H1 (cell line): ENCODE measurements at regions of chr13 and their contacts with region 1.

Region 1: GRCh38 chr13:78121459-78122348 is 203.1 kb upstream of the EDNRB start:
- DNase-seq: peak in 1 of 2 experiments; percentile 50
- H3K4me3 ChIP-seq: no peak overlapping the region
- H3K27ac ChIP-seq: no peak overlapping the region
- H3K4me1 ChIP-seq: peaks cover 0 to 5% (median 2%) of the 10 kb centered on the region in 4 experiments; a peak in 4 of 7 replicates
- H3K27me3 ChIP-seq: no peaks in the 10 kb centered on the region
- CTCF ChIP-seq: peak in 2 of 3 experiments; percentile 66 to 74; a peak in 3 of 4 replicates
- EP300 ChIP-seq: no peak
- POLR2A ChIP-seq: no peak
- RAD21 ChIP-seq: peak; percentile 88 to 90

Region 2: DNA sequence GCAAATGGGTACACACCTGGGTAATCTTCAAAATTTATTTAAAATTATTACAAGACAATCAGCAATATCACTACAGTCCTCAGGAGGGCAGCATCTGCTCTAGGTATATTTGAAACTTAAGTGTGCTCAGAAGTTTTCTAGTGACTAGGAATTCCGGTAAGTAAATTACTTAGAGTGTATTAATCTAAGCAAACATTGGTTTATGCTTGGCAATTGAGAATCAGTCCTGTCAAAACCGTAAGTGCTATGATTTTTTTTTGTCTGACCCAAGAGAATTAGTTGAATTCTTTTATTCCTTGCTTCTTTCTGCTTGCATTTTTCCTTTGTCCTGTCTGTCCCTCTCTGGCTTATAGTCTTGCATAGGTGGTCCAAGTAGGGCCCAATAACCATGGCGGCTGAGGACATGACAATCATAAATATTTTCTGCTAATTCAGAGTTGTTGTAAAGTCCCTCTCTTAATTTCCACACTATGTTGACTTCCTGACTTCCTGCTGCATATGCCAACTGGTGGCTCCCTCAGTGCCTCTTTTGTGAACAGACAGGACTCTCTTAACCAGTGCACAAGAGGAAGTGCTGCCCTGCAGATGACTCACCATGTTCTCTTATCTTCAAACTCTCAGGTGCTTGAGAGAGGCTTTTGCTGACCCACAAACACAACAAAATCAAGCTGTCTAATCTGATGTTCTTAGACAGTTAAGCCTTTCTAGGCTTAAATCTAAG is 342.0 kb before region 1 on chr13:
- CTCF ChIA-PET with region 1: interaction called, 78 read pairs
- POLR2A ChIA-PET with region 1: no interaction called
- DNase-seq: no peak
- H3K4me3 ChIP-seq: no peak overlapping the region
- H3K27ac ChIP-seq: no peak overlapping the region
- H3K4me1 ChIP-seq: peaks cover 0 to 4% (median 1%) of the 10 kb centered on the region in 4 experiments; a peak in 3 of 7 replicates
- H3K27me3 ChIP-seq: no peaks in the 10 kb centered on the region
- CTCF ChIP-seq: peak in 2 of 3 experiments; percentile 42 to 45; a peak in 2 of 4 replicates
- EP300 ChIP-seq: no peak
- POLR2A ChIP-seq: no peak
- RAD21 ChIP-seq: peak; percentile 80 to 83

Region 3: DNA sequence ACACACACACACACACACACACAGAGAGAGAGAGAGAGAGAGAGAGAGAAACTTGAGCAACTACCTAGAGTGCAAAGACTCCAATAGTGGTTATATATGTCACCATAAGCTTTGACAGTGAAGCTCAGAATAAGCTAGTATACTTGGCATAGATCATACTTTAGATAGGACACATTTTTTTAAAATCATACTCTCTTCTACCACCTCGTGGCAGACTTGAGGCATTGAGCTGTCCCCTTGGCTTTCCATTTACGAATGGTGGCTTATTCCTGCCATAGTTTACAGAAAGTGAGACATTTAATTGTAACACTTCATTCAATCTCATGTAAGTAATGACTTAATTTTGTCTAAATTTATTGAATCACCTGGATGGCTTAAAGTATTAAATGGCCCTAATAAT is 311.3 kb before region 1 on chr13:
- CTCF ChIA-PET with region 1: interaction called, 51 read pairs
- POLR2A ChIA-PET with region 1: no interaction called
- DNase-seq: no peak
- H3K4me3 ChIP-seq: no peak overlapping the region
- H3K27ac ChIP-seq: no peak overlapping the region
- H3K4me1 ChIP-seq: no peaks in the 10 kb centered on the region
- H3K27me3 ChIP-seq: no peaks in the 10 kb centered on the region
- CTCF ChIP-seq: peak in 1 of 3 experiments; percentile 52; a peak in 1 of 4 replicates
- EP300 ChIP-seq: no peak
- POLR2A ChIP-seq: no peak
- RAD21 ChIP-seq: peak; percentile 57 to 62

Region 4: GRCh38 chr13:78012040-78012439 is 109.7 kb before region 1 on chr13:
- CTCF ChIA-PET with region 1: interaction called, 15 read pairs
- POLR2A ChIA-PET with region 1: no interaction called
- DNase-seq: no peak
- H3K4me3 ChIP-seq: no peak overlapping the region
- H3K27ac ChIP-seq: no peak overlapping the region
- H3K4me1 ChIP-seq: peaks cover 0 to 2% (median 0%) of the 10 kb centered on the region in 4 experiments; a peak in 1 of 7 replicates
- H3K27me3 ChIP-seq: no peaks in the 10 kb centered on the region
- CTCF ChIP-seq: peak in 1 of 3 experiments; percentile 9; a peak in 2 of 4 replicates
- EP300 ChIP-seq: no peak
- POLR2A ChIP-seq: no peak
- RAD21 ChIP-seq: peak; percentile 13 to 33; a peak in 1 of 4 replicates

Region 5: GRCh38 chr13:78131811-78132210 is 10.1 kb after region 1 on chr13:
- CTCF ChIA-PET with region 1: interaction called, 19 read pairs
- POLR2A ChIA-PET with region 1: no interaction called
- DNase-seq: no peak
- H3K4me3 ChIP-seq: no peak overlapping the region
- H3K27ac ChIP-seq: no peak overlapping the region
- H3K4me1 ChIP-seq: no peaks in the 10 kb centered on the region
- H3K27me3 ChIP-seq: no peaks in the 10 kb centered on the region
- CTCF ChIP-seq: peak in 1 of 3 experiments; percentile 21; a peak in 1 of 4 replicates
- EP300 ChIP-seq: no peak
- POLR2A ChIP-seq: no peak
- RAD21 ChIP-seq: peak; percentile 20 to 40

Region 6: DNA sequence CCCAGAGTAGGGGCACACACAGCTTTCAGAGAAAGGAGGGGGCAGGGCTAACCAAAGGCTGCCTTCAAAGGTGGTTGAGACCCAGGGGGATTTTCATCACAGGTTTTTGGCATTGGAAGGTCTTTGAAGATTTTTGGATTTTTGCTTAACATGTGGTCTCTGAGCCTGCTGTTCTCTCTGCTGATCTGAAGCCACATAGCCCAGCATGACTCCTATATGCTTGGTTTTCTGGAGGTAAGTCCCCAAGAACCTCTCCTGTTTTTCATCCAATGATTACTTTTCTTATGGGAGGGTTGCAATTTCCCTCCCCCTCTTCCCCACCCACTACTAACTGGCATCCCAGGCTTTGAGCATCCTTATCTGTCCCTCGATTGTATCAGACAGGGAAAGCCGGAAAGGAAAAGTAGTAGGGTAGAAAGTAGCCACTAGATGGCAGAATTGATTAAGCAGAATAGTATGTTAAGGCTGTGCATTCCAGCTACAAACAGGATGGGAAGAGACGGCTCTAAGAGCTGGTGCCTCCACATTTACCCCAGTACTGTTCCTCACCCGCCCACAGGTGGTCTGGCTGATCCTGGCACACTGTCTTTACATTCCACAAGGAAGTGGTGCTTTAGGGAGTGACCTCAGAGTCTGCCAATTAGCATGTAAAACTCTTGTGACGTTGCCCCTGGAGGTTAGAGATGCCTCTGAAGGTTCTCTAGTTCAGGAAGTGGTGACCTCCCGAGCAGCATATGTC is 15.9 kb after region 1 on chr13:
- CTCF ChIA-PET with region 1: interaction called, 10 read pairs
- POLR2A ChIA-PET with region 1: no interaction called
- DNase-seq: peak; percentile 33 to 57
- H3K4me3 ChIP-seq: no peak overlapping the region
- H3K27ac ChIP-seq: no peak overlapping the region
- H3K4me1 ChIP-seq: peaks cover 0 to 5% (median under 1%) of the 10 kb centered on the region in 4 experiments; a peak in 1 of 7 replicates
- H3K27me3 ChIP-seq: no peaks in the 10 kb centered on the region
- CTCF ChIP-seq: peak in 2 of 3 experiments; percentile 58 to 74; a peak in 2 of 4 replicates
- EP300 ChIP-seq: no peak
- POLR2A ChIP-seq: no peak
- RAD21 ChIP-seq: peak; percentile 89 to 91

Region 7: DNA sequence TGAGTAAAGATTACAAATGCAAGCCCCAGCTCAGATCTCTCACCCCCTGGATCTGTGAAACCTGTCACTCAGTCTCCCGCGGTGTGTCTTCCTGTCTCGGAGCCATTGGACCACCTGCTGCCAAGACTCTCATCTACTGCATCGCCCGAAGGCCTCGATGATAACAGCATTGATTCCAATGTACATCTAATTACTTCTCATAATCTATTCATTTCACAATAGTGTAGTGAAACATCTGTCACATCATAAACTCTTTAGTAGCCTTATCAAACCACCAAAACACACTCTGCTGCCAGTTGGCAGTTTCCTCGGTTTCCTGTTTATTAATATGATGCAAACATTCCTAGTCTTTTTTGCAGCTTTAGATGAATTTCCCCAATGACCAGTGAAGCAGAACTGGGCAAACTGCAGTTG is 261.4 kb after region 1 on chr13:
- CTCF ChIA-PET with region 1: no interaction called
- POLR2A ChIA-PET with region 1: no interaction called
- DNase-seq: no peak
- H3K4me3 ChIP-seq: no peak overlapping the region
- H3K27ac ChIP-seq: no peak overlapping the region
- H3K4me1 ChIP-seq: no peaks in the 10 kb centered on the region; a peak in 1 of 7 replicates
- H3K27me3 ChIP-seq: no peaks in the 10 kb centered on the region
- CTCF ChIP-seq: no peak
- EP300 ChIP-seq: no peak
- POLR2A ChIP-seq: no peak
- RAD21 ChIP-seq: no peak